MCF 10A (cell line): ENCODE measurements at regions of chr6 and their contacts with region 1.

Region 1: DNA sequence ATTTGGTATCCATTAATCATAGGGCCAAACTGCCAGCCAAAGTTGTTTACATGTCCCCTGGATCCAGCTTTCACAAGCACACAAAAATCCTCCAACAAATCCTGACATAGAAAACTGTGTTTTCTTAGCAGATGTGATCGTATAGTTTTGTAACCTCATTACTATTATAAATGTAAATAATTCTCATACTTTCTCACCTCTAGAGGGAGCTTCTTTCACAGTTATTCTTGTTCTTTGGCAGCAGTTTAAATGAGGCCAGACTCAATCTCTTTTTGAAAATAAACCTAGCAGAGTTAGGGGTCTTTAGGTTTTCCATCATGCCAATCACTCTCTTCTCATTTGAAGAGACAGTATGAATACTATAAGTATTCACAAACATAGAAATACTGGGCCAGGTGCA is 17.0 kb upstream of the ZNF318 start:
- DNase-seq: peak; percentile 29
- H3K4me3 Mint-ChIP-seq: no peak overlapping the region
- H3K27ac Mint-ChIP-seq: no peak overlapping the region
- H3K4me1 Mint-ChIP-seq: peaks cover 13% of the 10 kb centered on the region
- H3K27me3 Mint-ChIP-seq: no peaks in the 10 kb centered on the region
- CTCF ChIP-seq: peak; percentile 35

Region 2: DNA sequence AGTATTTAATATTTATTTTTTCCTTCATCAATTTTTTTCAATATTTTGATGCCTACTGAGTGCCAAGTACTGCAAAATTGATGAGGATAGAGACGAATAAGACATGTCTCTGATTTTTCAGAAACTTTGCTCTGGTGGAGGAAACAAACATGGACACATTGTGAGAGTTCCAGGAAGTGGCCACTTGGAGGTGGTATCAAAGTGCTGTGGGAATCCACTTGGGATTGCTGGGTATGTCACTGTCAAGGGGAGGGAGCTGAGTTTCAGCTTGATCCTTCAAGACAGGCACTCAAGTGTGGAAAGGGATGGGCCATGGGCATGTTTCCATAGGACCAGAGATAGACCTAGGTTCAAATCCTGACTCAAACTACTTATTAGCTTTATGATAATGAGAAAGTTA is 16.3 kb after region 1 on chr6:
- CTCF ChIA-PET with region 1: interaction called, 12 read pairs
- POLR2A ChIA-PET with region 1: no interaction called
- intact Hi-C with region 1: no loop called
- DNase-seq: peak; percentile 18
- H3K4me3 Mint-ChIP-seq: no peak overlapping the region
- H3K27ac Mint-ChIP-seq: no peak overlapping the region
- H3K4me1 Mint-ChIP-seq: peaks cover 7% of the 10 kb centered on the region
- H3K27me3 Mint-ChIP-seq: no peaks in the 10 kb centered on the region
- CTCF ChIP-seq: no peak

Region 3: GRCh38 chr6:43454696-43455530 is 68.4 kb after region 1 on chr6:
- CTCF ChIA-PET with region 1: interaction called, 3 read pairs
- POLR2A ChIA-PET with region 1: no interaction called
- intact Hi-C with region 1: loop called (anchors 2 kb)
- DNase-seq: peak; percentile 78
- H3K4me3 Mint-ChIP-seq: peak overlapping the region; percentile 83
- H3K27ac Mint-ChIP-seq: peak overlapping the region; percentile 27
- H3K4me1 Mint-ChIP-seq: peaks cover 15% of the 10 kb centered on the region
- H3K27me3 Mint-ChIP-seq: no peaks in the 10 kb centered on the region
- CTCF ChIP-seq: no peak

Region 4: GRCh38 chr6:43972913-43973300 is 586.4 kb after region 1 on chr6:
- CTCF ChIA-PET with region 1: no interaction called
- POLR2A ChIA-PET with region 1: no interaction called
- intact Hi-C with region 1: no loop called
- DNase-seq: peak; percentile 92
- H3K4me3 Mint-ChIP-seq: peak overlapping the region; percentile 52
- H3K27ac Mint-ChIP-seq: peak overlapping the region; percentile 80
- H3K4me1 Mint-ChIP-seq: peaks cover 41% of the 10 kb centered on the region
- H3K27me3 Mint-ChIP-seq: no peaks in the 10 kb centered on the region
- CTCF ChIP-seq: no peak